B cell (primary cell): ENCODE measurements at regions of chr15 and their contacts with region 1.

Region 1: GRCh38 chr15:41774062-41774881 is at the start of gene MAPKBP1:
- DNase-seq: peak; percentile 99
- ATAC-seq: peak; percentile 91
- H3K4me3 ChIP-seq: peak within 1 kb of the TSS; percentile 75 to 87 (median 78)
- H3K4me3 Mint-ChIP-seq: peak within 1 kb of the TSS; percentile 99
- H3K27ac ChIP-seq: peak within 1 kb of the TSS; percentile 62 to 71
- H3K27ac Mint-ChIP-seq: peak within 1 kb of the TSS; percentile 96
- H3K4me1 ChIP-seq: peaks cover 30 to 32% of the 10 kb centered on the region in 2 donors
- H3K4me1 Mint-ChIP-seq: peaks cover 57% of the 10 kb centered on the region
- H3K27me3 ChIP-seq: no peaks in the 10 kb centered on the region
- H3K27me3 Mint-ChIP-seq: no peaks in the 10 kb centered on the region
- CTCF ChIP-seq: peak; percentile 83
- total RNA-seq, gene MAPKBP1: 59.2 and 65.5 TPM in 2 replicates

Region 2: GRCh38 chr15:40232625-40233070 is 1541.6 kb before region 1 on chr15:
- CTCF ChIA-PET with region 1: no interaction called
- POLR2A ChIA-PET with region 1: no interaction called
- intact Hi-C with region 1: no loop called
- DNase-seq: no peak
- ATAC-seq: no peak
- H3K4me3 ChIP-seq: no peak overlapping the region
- H3K4me3 Mint-ChIP-seq: no peak overlapping the region
- H3K27ac ChIP-seq: no peak overlapping the region
- H3K27ac Mint-ChIP-seq: no peak overlapping the region
- H3K4me1 ChIP-seq: peaks cover 14 to 15% of the 10 kb centered on the region in 2 donors
- H3K4me1 Mint-ChIP-seq: peaks cover 17% of the 10 kb centered on the region
- H3K27me3 ChIP-seq: no peaks in the 10 kb centered on the region
- H3K27me3 Mint-ChIP-seq: no peaks in the 10 kb centered on the region
- CTCF ChIP-seq: no peak

Region 3: DNA sequence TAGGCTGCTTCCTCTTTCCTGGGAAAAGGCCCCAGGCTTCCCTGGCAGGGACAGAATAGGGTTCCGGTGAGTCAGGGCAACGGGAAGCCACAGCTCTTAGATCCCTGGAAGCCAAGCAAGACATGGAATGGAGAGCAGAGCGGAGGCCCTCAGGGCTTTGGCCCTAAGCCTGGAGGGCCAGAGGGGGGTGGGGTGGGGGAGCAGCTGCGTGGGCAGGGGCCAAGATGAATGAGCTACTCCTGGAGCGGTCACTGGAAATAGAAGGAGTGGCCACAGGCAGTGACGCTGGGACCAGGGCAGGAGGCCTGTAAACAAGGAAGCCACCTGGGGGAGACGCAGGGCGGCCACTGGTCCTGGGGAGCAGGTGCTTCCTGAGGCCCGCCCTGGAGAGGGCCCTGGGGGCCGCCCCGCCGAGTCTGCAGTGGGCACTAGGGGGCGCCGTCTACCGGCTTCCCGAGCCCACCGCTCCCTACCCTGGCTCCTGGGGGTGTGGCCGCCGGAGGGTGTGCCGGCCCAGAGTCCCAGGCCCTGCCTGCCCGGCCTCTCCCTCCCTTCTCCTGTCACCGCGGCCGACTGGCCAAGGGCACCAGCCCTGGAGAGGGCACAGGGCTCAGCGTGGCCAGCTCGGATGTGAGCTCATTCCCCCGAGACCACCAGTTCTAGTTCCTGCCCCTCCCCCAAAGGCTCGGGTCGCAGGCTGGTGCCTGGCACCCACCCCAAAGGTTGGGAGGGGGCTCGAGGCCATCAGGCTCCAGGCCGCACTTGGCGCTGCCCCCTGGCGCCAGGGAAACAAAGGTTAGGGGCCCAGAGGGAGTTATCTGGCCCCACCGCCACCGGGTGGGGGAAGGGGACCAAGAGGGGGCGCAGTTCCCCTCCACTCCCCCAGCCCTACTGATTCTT is 867.9 kb before region 1 on chr15:
- CTCF ChIA-PET with region 1: interaction called, 3 read pairs
- POLR2A ChIA-PET with region 1: no interaction called
- intact Hi-C with region 1: loop called (anchors 2 kb)
- DNase-seq: peak; percentile 93
- ATAC-seq: peak; percentile 77
- H3K4me3 ChIP-seq: peak overlapping the region; percentile 46 to 95 (median 83)
- H3K4me3 Mint-ChIP-seq: peak overlapping the region; percentile 93
- H3K27ac ChIP-seq: peak overlapping the region; percentile 98 to 99
- H3K27ac Mint-ChIP-seq: peak overlapping the region; percentile 98
- H3K4me1 ChIP-seq: peaks cover 30 to 60% of the 10 kb centered on the region in 2 donors
- H3K4me1 Mint-ChIP-seq: peaks cover 48% of the 10 kb centered on the region
- H3K27me3 ChIP-seq: no peaks in the 10 kb centered on the region
- H3K27me3 Mint-ChIP-seq: no peaks in the 10 kb centered on the region
- CTCF ChIP-seq: peak; percentile 98

Region 4: GRCh38 chr15:41203395-41203794 is 570.9 kb before region 1 on chr15:
- CTCF ChIA-PET with region 1: no interaction called
- POLR2A ChIA-PET with region 1: no interaction called
- intact Hi-C with region 1: no loop called
- DNase-seq: no peak
- ATAC-seq: no peak
- H3K4me3 ChIP-seq: no peak overlapping the region
- H3K4me3 Mint-ChIP-seq: no peak overlapping the region
- H3K27ac ChIP-seq: no peak overlapping the region
- H3K27ac Mint-ChIP-seq: no peak overlapping the region
- H3K4me1 ChIP-seq: no peaks in the 10 kb centered on the region
- H3K4me1 Mint-ChIP-seq: no peaks in the 10 kb centered on the region
- H3K27me3 ChIP-seq: no peaks in the 10 kb centered on the region
- H3K27me3 Mint-ChIP-seq: peaks cover 3% of the 10 kb centered on the region
- CTCF ChIP-seq: no peak

Region 5: GRCh38 chr15:41557673-41558399 is 216.4 kb before region 1 on chr15:
- CTCF ChIA-PET with region 1: no interaction called
- POLR2A ChIA-PET with region 1: no interaction called
- intact Hi-C with region 1: loop called (anchors 1 kb)
- DNase-seq: peak; percentile 77
- ATAC-seq: peak; percentile 53
- H3K4me3 ChIP-seq: peak overlapping the region in 2 of 5 experiments; percentile 43 to 65
- H3K4me3 Mint-ChIP-seq: peak overlapping the region; percentile 87
- H3K27ac ChIP-seq: no peak overlapping the region
- H3K27ac Mint-ChIP-seq: no peak overlapping the region
- H3K4me1 ChIP-seq: peaks cover 20 to 25% of the 10 kb centered on the region in 2 donors
- H3K4me1 Mint-ChIP-seq: peaks cover 24% of the 10 kb centered on the region
- H3K27me3 ChIP-seq: peaks cover 0 to 46% (median 15%) of the 10 kb centered on the region in 4 experiments
- H3K27me3 Mint-ChIP-seq: peaks cover 38% of the 10 kb centered on the region
- CTCF ChIP-seq: peak; percentile 89

Region 6: GRCh38 chr15:41730543-41730942 is 43.7 kb before region 1 on chr15:
- CTCF ChIA-PET with region 1: no interaction called
- POLR2A ChIA-PET with region 1: no interaction called
- intact Hi-C with region 1: no loop called
- DNase-seq: peak; percentile 44
- ATAC-seq: peak; percentile 60
- H3K4me3 ChIP-seq: no peak overlapping the region
- H3K4me3 Mint-ChIP-seq: peak overlapping the region; percentile 15
- H3K27ac ChIP-seq: no peak overlapping the region
- H3K27ac Mint-ChIP-seq: peak overlapping the region; percentile 69
- H3K4me1 ChIP-seq: peaks cover 9% of the 10 kb centered on the region in 2 donors
- H3K4me1 Mint-ChIP-seq: peaks cover 11% of the 10 kb centered on the region
- H3K27me3 ChIP-seq: no peaks in the 10 kb centered on the region
- H3K27me3 Mint-ChIP-seq: no peaks in the 10 kb centered on the region
- CTCF ChIP-seq: no peak

Region 7: GRCh38 chr15:41790756-41791546 is 16.7 kb after region 1 on chr15:
- CTCF ChIA-PET with region 1: interaction called, 45 read pairs
- POLR2A ChIA-PET with region 1: interaction called, 5 read pairs
- intact Hi-C with region 1: no loop called
- DNase-seq: no peak
- ATAC-seq: no peak
- H3K4me3 ChIP-seq: no peak overlapping the region
- H3K4me3 Mint-ChIP-seq: peak overlapping the region; percentile 4
- H3K27ac ChIP-seq: no peak overlapping the region
- H3K27ac Mint-ChIP-seq: no peak overlapping the region
- H3K4me1 ChIP-seq: peaks cover 32 to 41% of the 10 kb centered on the region in 2 donors
- H3K4me1 Mint-ChIP-seq: peaks cover 54% of the 10 kb centered on the region
- H3K27me3 ChIP-seq: no peaks in the 10 kb centered on the region
- H3K27me3 Mint-ChIP-seq: no peaks in the 10 kb centered on the region
- CTCF ChIP-seq: no peak

Region 8: GRCh38 chr15:41827880-41828806 is 53.9 kb after region 1 on chr15 and contains the start of gene JMJD7:
- CTCF ChIA-PET with region 1: interaction called, 38 read pairs
- POLR2A ChIA-PET with region 1: interaction called, 5 read pairs
- intact Hi-C with region 1: loop called (anchors 1 kb)
- DNase-seq: peak; percentile 93
- ATAC-seq: peak; percentile 99
- H3K4me3 ChIP-seq: peak within 1 kb of the TSS; percentile 54 to 95 (median 87)
- H3K4me3 Mint-ChIP-seq: peak within 1 kb of the TSS; percentile 86
- H3K27ac ChIP-seq: peak within 1 kb of the TSS; percentile 32 to 53
- H3K27ac Mint-ChIP-seq: peak within 1 kb of the TSS; percentile 63
- H3K4me1 ChIP-seq: peaks cover 16 to 28% of the 10 kb centered on the region in 2 donors
- H3K4me1 Mint-ChIP-seq: peaks cover 26% of the 10 kb centered on the region
- H3K27me3 ChIP-seq: no peaks in the 10 kb centered on the region
- H3K27me3 Mint-ChIP-seq: no peaks in the 10 kb centered on the region
- CTCF ChIP-seq: no peak
- total RNA-seq, gene JMJD7: 41.1 and 43.9 TPM in 2 replicates

Region 9: DNA sequence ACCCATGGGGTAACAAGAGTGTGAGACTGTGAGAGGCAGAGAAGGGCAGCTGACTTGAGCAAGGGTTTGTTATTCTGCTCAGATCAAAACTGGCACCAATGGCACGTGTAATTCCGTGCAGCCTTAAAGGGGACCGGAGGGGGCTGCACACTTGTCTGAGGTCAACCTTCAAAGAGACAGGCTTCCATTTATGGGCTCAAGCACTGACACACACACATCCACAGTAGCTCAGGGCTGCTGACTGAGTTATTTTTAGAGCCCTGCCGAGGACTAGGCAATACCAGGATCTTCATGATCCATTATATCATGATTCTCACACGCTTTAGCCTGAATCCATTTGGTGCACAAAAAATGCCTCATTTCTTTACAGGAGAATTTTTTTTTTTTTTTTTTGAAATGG is 140.1 kb after region 1 on chr15:
- CTCF ChIA-PET with region 1: interaction called, 257 read pairs
- POLR2A ChIA-PET with region 1: no interaction called
- intact Hi-C with region 1: no loop called
- DNase-seq: no peak
- ATAC-seq: no peak
- H3K4me3 ChIP-seq: no peak overlapping the region
- H3K4me3 Mint-ChIP-seq: no peak overlapping the region
- H3K27ac ChIP-seq: no peak overlapping the region
- H3K27ac Mint-ChIP-seq: no peak overlapping the region
- H3K4me1 ChIP-seq: peaks cover 0 to 10% of the 10 kb centered on the region in 2 donors
- H3K4me1 Mint-ChIP-seq: peaks cover 9% of the 10 kb centered on the region
- H3K27me3 ChIP-seq: no peaks in the 10 kb centered on the region
- H3K27me3 Mint-ChIP-seq: no peaks in the 10 kb centered on the region
- CTCF ChIP-seq: no peak

Region 10: GRCh38 chr15:42084460-42085235 is 310.4 kb after region 1 on chr15:
- CTCF ChIA-PET with region 1: no interaction called
- POLR2A ChIA-PET with region 1: no interaction called
- intact Hi-C with region 1: loop called (anchors 1 kb)
- DNase-seq: peak; percentile 66
- ATAC-seq: peak; percentile 70
- H3K4me3 ChIP-seq: no peak overlapping the region
- H3K4me3 Mint-ChIP-seq: no peak overlapping the region
- H3K27ac ChIP-seq: no peak overlapping the region
- H3K27ac Mint-ChIP-seq: no peak overlapping the region
- H3K4me1 ChIP-seq: peaks cover 0 to 7% of the 10 kb centered on the region in 2 donors
- H3K4me1 Mint-ChIP-seq: peaks cover 4% of the 10 kb centered on the region
- H3K27me3 ChIP-seq: peaks cover 0 to 20% (median 2%) of the 10 kb centered on the region in 4 experiments
- H3K27me3 Mint-ChIP-seq: peaks cover 24% of the 10 kb centered on the region
- CTCF ChIP-seq: peak; percentile 85